Left cardiac atrium (tissue), 4 donors: ENCODE measurements at regions of chr9 and their contacts with region 1.

Region 1: DNA sequence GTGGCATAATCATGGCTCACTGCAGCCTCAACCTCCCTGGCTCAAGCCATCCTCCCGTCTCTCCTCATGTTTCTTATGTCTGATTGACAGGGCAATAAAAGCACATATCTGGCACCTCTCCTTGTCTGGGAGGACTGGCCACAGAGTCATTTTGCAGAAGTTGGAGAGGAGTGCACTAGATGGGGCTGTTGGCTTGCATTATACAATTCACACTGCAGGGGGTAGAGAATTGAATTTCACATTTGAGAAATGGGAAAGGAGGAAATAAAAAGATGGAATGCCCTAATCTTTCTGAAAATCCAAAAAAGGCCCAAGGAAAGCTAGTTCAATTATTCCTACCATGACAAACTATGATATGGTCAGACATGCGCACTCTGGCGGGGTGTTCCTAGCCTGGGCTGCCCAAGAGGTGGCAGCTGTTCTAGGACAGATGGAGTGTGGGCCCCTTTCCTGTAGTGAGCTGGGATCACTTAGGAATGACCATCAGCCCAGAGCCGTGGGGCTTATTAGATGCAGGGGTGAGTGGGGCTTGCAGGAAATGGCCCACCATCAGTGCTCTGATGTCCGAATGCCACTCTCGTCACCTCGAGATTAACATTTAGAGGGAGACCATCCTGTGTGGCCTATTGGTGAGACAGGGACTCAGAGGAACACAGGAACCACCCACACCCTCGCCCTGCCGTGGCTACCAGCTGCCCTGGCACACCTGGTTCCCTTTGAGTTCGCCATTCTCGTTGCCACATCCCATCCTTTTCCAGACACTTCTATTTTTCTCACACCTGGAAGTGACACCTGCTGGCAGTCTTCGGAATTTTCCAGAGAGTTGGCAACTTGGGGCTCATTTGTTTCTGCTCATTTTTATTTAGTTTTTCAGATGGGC is 21.8 kb upstream of the ANKRD18A start:
- DNase-seq: no peak
- ATAC-seq: peak; percentile 84 to 91

Region 2: GRCh38 chr9:38713426-38713825 is 71.2 kb after region 1 on chr9:
- intact Hi-C with region 1: loop called in 1 of 2 experiments (anchors 10 kb)
- DNase-seq: no peak
- ATAC-seq: peak; percentile 95 to 97